Activated CD4-positive, alpha-beta T cell treated with anti-CD3 and anti-CD28 coated beads, Interleukin-2, amount 10 ng/mL, durations not matched to agents 24 days and 14 days (primary cell): ENCODE measurements at regions of chr16 and their contacts with region 1.

Region 1: GRCh38 chr16:84084570-84085270 is 32.0 kb downstream of the MBTPS1 start:
- DNase-seq: peak; percentile 91
- H3K4me3 Mint-ChIP-seq: no peak overlapping the region
- H3K27ac Mint-ChIP-seq: peak overlapping the region; percentile 1
- H3K4me1 Mint-ChIP-seq: peaks cover 30% of the 10 kb centered on the region
- H3K27me3 Mint-ChIP-seq: no peaks in the 10 kb centered on the region

Region 2: DNA sequence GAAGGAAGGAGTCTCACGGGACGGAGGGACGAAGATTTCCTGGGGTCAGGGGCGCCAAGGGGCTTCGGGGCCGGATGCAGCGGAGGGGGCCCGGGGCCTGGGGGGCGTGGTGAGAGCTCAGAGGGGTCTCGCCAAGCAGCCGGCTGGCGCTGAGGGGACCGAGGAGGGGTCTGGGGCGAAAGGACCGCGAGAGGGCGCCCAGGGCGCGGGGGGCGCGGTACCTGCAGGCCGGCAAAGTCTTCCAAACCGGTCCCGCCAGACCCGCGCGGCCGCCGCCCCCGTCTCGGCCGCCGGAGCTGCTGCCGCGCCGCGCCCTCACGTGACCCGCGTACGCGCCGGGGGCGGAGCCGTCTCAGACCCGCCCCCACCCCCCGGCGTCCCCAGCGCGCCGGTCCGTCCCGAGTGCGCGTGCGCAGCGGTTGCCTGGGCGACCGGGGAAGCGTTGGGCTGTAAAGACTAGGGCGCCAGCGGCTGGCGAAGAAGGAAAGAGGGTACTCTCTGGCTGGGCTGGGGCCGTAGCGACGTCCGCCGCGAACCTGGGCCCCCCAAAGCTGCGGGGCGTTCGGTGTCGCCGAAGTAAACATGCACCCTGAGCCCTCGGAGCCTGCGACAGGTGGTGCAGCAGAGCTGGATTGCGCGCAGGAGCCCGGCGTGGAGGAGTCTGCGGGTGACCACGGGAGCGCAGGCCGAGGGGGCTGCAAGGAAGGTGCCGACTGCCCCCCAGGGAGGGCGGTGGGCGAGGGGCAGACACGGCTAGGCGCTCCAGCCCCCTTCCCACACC is 60.3 kb after region 1 on chr16 and contains the starts of genes DNAAF1 and HSDL1:
- intact Hi-C with region 1: loop called (anchors 2 kb)
- DNase-seq: peak; percentile 99
- H3K4me3 Mint-ChIP-seq: peak within 1 kb of the TSS; percentile 94
- H3K27ac Mint-ChIP-seq: peak within 1 kb of the TSS; percentile 86
- H3K4me1 Mint-ChIP-seq: peaks cover 11% of the 10 kb centered on the region
- H3K27me3 Mint-ChIP-seq: peaks cover 16% of the 10 kb centered on the region
- total RNA-seq, gene DNAAF1: not detected in 2 replicates
- total RNA-seq, gene HSDL1: 16.4 and 17.6 TPM in 2 replicates

Region 3: GRCh38 chr16:84175350-84176081 is 90.8 kb after region 1 on chr16:
- intact Hi-C with region 1: loop called (anchors 1 kb)
- DNase-seq: peak; percentile 83
- H3K4me3 Mint-ChIP-seq: no peak overlapping the region
- H3K27ac Mint-ChIP-seq: no peak overlapping the region
- H3K4me1 Mint-ChIP-seq: peaks cover 11% of the 10 kb centered on the region
- H3K27me3 Mint-ChIP-seq: peaks cover 3% of the 10 kb centered on the region

Region 4: GRCh38 chr16:84186685-84187437 is 102.1 kb after region 1 on chr16 and contains the start of gene TAF1C:
- intact Hi-C with region 1: loop called (anchors 1 kb)
- DNase-seq: peak; percentile 97
- H3K4me3 Mint-ChIP-seq: peak within 1 kb of the TSS; percentile 94
- H3K27ac Mint-ChIP-seq: peak within 1 kb of the TSS; percentile 95
- H3K4me1 Mint-ChIP-seq: peaks cover 18% of the 10 kb centered on the region
- H3K27me3 Mint-ChIP-seq: no peaks in the 10 kb centered on the region
- total RNA-seq, gene TAF1C: 60.3 and 61.1 TPM in 2 replicates

Region 5: GRCh38 chr16:84504420-84505248 is 419.9 kb after region 1 on chr16 and contains the start of gene MEAK7:
- intact Hi-C with region 1: loop called (anchors 10 kb)
- DNase-seq: peak; percentile 100
- H3K4me3 Mint-ChIP-seq: peak within 1 kb of the TSS; percentile 83
- H3K27ac Mint-ChIP-seq: peak within 1 kb of the TSS; percentile 87
- H3K4me1 Mint-ChIP-seq: peaks cover 41% of the 10 kb centered on the region
- H3K27me3 Mint-ChIP-seq: no peaks in the 10 kb centered on the region
- total RNA-seq, gene MEAK7: 11.7 and 12.5 TPM in 2 replicates